ENCODE measurements at regions of chr6 and their contacts with region 1.

Region 1: DNA sequence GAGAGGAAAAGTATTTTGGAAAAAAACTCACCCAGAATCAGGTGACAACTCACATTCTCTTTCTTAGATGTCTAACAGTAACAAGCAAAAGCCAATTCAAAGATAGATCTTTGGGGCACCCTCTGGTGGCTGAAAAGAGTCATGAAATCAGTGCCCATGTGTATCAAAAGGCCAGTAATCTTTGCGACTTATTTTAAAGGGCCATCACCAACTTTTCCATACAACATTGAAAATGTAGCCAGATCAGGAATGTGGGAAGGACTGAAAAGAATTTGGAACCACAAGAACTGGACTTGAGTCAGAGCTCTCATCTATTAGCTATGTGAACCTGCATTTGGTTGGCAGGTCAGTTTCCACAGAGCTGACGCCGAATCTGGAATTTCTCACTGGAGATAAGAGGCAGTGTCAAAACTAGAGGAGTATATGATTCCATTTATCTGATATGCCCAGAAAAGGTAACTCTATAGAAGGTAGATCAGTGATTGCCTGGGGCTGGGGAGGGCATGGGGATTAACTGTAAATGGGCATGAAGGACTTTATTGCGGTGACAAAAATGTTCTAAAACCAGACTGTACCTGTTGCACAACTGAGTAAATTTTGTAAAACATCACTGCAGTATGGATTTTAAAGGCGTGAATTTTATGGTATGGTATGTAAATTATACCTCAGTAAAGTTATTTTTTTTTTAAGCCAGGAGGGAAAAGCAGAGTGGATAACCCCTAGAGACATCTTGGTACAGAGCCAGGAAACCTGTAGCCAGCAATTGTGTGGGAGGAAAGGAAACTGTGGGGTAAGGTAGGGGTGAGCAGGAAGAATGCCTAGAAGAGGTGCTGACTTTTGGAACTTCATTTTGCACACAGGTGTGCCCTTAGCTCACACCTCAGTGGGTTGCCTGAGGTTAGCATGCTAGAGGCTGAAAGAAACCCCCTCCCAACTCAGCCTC is 117.1 kb upstream of the ASF1A start:
- DNase-seq: peak; percentile 88
- ATAC-seq: peak; percentile 92
- H3K4me3 Mint-ChIP-seq: no peak overlapping the region
- H3K27ac Mint-ChIP-seq: peak overlapping the region; percentile 54
- H3K4me1 Mint-ChIP-seq: peaks cover 23% of the 10 kb centered on the region
- H3K27me3 Mint-ChIP-seq: no peaks in the 10 kb centered on the region
- CTCF ChIP-seq: peak; percentile 87

Region 2: DNA sequence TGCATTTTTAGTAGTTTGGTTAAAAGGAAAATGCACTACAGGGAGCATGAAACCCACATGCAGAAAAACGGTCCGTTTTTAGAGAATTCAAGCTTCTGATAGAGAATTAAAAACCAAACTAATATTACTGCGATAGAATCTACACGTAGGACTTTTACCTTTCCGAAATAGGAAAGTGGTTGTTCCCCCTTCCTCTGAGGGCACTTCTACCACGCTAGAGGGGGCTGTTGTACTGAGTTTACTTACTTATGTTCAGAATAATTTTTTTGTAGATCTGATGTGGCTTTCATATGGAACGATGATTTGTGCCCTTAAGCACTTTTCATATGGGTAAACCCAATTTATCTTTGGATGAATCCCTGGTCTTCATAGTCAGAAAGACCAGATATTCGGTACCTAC is 493.1 kb before region 1 on chr6:
- CTCF ChIA-PET with region 1: no interaction called
- POLR2A ChIA-PET with region 1: no interaction called
- intact Hi-C with region 1: loop called (anchors 10 kb)
- DNase-seq: peak; percentile 68
- ATAC-seq: peak; percentile 65
- H3K4me3 Mint-ChIP-seq: no peak overlapping the region
- H3K27ac Mint-ChIP-seq: no peak overlapping the region
- H3K4me1 Mint-ChIP-seq: peaks cover 2% of the 10 kb centered on the region
- H3K27me3 Mint-ChIP-seq: peaks cover 14% of the 10 kb centered on the region
- CTCF ChIP-seq: peak; percentile 85

Region 3: GRCh38 chr6:118660218-118660569 is 116.7 kb before region 1 on chr6:
- CTCF ChIA-PET with region 1: interaction called, 5 read pairs
- POLR2A ChIA-PET with region 1: no interaction called
- intact Hi-C with region 1: loop called (anchors 5 kb)
- DNase-seq: peak; percentile 81
- ATAC-seq: peak; percentile 52
- H3K4me3 Mint-ChIP-seq: peak overlapping the region; percentile 45
- H3K27ac Mint-ChIP-seq: peak overlapping the region; percentile 87
- H3K4me1 Mint-ChIP-seq: peaks cover 74% of the 10 kb centered on the region
- H3K27me3 Mint-ChIP-seq: no peaks in the 10 kb centered on the region
- CTCF ChIP-seq: no peak

Region 4: GRCh38 chr6:118697554-118697953 is 79.3 kb before region 1 on chr6:
- CTCF ChIA-PET with region 1: interaction called, 10 read pairs
- POLR2A ChIA-PET with region 1: no interaction called
- intact Hi-C with region 1: no loop called
- DNase-seq: no peak
- ATAC-seq: no peak
- H3K4me3 Mint-ChIP-seq: no peak overlapping the region
- H3K27ac Mint-ChIP-seq: no peak overlapping the region
- H3K4me1 Mint-ChIP-seq: peaks cover 81% of the 10 kb centered on the region
- H3K27me3 Mint-ChIP-seq: no peaks in the 10 kb centered on the region
- CTCF ChIP-seq: no peak

Region 5: DNA sequence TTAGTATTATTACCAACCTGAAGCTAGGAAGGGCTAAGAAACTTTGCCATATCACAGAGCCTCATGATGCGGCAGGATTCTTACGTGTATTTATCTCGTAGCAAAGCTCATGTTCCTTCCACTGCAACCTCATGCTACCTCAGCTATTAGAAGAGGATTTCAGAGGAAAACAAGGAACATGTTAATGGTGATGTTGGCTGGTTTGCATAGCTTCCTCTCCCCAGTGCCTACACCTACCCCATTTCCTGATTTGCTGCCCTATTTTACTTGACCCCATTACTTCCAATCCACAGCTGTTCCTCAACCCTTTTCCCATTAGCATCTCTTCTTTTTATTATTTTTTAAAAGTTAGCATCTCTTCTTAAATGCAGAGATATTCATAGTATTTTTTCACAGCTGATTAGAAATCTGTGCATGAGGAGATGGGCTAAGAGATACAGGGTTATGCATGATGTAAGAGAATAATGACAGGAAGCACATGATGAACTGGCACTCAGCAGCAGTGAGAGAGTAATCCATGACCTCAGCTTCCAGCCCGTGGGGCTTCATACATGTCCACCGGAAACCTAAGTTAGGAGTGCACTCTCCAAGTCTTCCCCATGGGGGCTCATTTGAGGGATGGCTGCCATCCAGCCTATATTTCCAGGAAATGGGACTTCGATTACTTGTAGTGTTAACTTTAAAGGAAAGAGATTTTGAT is 11.0 kb after region 1 on chr6:
- CTCF ChIA-PET with region 1: interaction called, 23 read pairs
- POLR2A ChIA-PET with region 1: no interaction called
- intact Hi-C with region 1: no loop called
- DNase-seq: no peak
- ATAC-seq: peak; percentile 51
- H3K4me3 Mint-ChIP-seq: no peak overlapping the region
- H3K27ac Mint-ChIP-seq: peak overlapping the region; percentile 42
- H3K4me1 Mint-ChIP-seq: peaks cover 37% of the 10 kb centered on the region
- H3K27me3 Mint-ChIP-seq: no peaks in the 10 kb centered on the region
- CTCF ChIP-seq: no peak

Region 6: DNA sequence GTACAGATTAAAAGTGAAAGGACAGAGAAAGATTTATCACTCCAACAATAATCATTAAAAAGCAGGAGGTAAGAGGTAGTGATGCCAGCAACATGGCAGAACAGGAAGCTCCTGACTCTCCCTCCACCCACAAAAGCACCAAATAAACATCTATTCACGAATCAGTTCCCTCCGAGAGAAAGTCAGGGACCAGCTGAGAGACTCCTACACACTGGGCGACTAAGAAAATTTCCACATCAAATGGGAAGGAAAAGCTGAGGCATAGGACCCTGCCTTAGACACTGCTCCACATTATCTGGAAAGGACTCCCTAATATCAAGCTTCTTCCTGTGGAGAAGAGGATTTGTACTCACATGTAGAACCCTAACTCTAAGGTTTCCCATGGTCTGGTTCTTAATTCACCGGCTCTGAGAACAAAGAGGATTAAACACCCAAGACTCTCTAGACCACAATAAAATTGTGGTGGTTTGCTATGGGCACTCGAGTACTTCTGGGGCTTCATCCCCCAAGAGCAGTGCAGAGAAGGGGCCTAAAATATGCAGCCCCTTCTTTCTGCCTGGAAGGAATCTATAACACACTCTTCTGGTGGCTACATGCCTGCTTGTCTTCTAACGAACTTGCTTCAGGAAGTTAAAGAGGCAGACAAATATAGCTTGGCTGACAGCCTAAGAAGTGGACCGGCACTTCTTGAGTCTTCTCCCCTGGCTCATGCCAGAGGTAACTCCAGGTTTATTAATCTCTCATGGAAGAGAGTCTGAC is 87.6 kb after region 1 on chr6:
- CTCF ChIA-PET with region 1: no interaction called
- POLR2A ChIA-PET with region 1: no interaction called
- intact Hi-C with region 1: no loop called
- DNase-seq: no peak
- ATAC-seq: peak; percentile 53
- H3K4me3 Mint-ChIP-seq: peak overlapping the region; percentile 53
- H3K27ac Mint-ChIP-seq: peak overlapping the region; percentile 63
- H3K4me1 Mint-ChIP-seq: peaks cover 60% of the 10 kb centered on the region
- H3K27me3 Mint-ChIP-seq: no peaks in the 10 kb centered on the region
- CTCF ChIP-seq: no peak